Aorta (tissue), 5 donors: ENCODE measurements at regions of chr9 and their contacts with region 1.

Region 1: DNA sequence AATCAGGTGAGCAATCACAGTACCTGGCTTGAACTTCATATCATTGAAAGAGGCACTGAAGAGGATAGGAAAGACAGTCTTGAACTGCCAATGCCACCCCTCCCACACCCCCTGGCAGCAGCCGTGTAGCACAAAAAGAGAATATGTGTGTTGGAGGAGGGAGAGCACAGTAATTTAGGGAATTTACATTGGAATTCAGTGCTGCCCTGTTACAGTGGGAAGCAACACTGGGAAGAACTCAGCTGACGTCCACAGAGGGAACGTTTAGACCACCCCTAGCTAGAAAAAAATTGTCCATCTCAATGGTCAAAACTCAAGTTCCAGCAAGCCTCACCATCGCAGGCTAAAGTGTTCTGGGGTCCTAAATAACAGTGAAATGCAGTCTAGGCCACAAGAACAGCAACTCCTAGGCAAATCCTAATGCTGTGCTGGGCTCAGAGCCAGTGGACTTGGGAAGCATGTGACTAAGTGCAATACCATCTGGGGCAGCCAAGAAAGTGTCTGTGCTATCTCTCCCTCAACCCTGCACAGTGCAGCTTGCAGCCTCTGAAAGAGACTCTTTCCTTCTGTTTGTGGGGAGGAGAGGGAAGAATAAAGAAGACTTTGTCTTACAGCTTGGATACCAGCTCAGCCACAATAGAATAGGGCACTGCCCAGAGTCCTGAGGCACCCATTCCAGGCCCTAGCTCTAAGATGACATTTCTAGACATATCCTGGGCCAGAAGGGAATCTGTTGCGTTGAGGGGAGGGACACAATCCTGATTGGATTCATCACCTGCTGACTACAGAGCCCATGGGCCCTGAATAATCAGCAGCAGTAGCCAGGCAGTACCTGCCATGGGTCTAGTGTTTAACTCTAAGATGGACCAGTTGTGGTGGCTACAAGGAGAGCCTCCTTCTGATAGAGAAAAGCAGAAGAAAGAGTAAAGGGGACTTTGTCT is 62.1 kb upstream of the VLDLR start:
- DNase-seq: peak; percentile 81 to 89
- ATAC-seq: peak; percentile 93
- H3K4me3 ChIP-seq: no peak overlapping the region
- H3K27ac ChIP-seq: peak overlapping the region in 1 of 2 donors; percentile 87
- H3K4me1 ChIP-seq: peaks cover 0 to 3% of the 10 kb centered on the region in 2 donors
- H3K27me3 ChIP-seq: no peaks in the 10 kb centered on the region

Region 2: DNA sequence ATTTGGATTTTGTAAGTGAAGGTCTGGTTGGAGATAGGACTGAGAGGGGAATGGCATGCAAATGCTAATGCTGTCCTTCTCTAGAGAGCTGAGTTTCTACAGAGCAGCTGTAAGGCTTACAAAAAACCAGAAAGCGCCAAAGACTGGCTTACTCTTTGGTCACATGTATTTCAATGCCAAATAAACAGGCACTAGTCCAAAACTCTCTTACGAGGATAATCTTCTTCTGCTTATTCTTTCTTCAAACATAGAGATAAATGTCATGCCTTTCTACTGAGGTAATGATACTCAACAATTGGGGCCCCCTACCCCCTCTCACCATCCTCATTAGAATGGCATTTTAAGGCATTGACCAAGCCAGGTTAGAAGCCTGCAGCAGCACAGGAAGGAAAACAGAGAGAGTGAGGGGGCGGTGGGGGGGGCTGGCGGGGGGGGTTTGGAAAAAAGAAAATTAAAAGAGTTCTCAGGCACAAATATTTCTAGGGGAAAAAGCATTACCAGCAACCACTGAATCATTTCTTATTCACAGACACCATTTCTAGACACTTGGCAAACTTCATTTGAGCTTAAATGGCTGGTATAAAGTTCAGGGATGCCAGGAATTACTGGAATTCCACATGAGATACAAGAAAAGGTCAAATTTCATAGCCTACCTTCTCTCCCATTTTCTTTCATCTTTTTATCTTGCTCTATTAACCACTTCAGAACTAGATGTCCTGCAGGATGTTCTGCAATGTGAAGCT is 250.4 kb after region 1 on chr9:
- intact Hi-C with region 1: loop called in 1 of 2 experiments (anchors 10 kb)
- DNase-seq: no peak
- ATAC-seq: peak; percentile 80
- H3K4me3 ChIP-seq: peak overlapping the region in 1 of 2 donors; percentile 34
- H3K27ac ChIP-seq: peak overlapping the region; percentile 75 to 99
- H3K4me1 ChIP-seq: peaks cover 7 to 8% of the 10 kb centered on the region in 2 donors
- H3K27me3 ChIP-seq: no peaks in the 10 kb centered on the region